A673 (cell line): ENCODE measurements at regions of chr21 and their contacts with region 1.

Region 1: DNA sequence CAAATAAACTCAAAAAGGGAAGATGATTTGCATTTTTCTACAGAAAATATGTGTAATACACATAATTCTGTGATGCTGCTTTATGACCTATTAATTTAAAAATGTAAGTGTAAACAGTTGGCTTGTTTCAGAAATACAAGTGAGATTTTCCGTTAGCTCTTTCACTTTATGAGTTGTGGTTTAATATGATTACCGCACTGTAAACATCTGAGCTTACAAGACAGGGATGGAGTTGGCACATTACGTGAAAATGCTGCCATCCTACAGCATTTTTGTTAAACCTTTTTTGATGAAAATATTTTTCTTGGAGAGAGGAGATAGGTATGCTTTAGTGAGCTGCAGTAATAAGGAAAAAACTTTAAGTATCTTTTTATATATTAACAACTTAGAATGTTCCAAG is 426.8 kb upstream of the ADAMTS5 start:
- DNase-seq: no peak
- H3K4me3 ChIP-seq: no peak overlapping the region
- H3K27ac ChIP-seq: no peak overlapping the region
- H3K4me1 ChIP-seq: no peaks in the 10 kb centered on the region
- H3K27me3 ChIP-seq: no peaks in the 10 kb centered on the region
- CTCF ChIP-seq: no peak

Region 2: GRCh38 chr21:25688275-25689155 is 1705.2 kb before region 1 on chr21:
- CTCF ChIA-PET with region 1: no interaction called
- POLR2A ChIA-PET with region 1: interaction called, 24 read pairs
- intact Hi-C with region 1: no loop called
- DNase-seq: no peak
- H3K4me3 ChIP-seq: no peak overlapping the region
- H3K27ac ChIP-seq: no peak overlapping the region
- H3K4me1 ChIP-seq: no peaks in the 10 kb centered on the region
- H3K27me3 ChIP-seq: no peaks in the 10 kb centered on the region
- CTCF ChIP-seq: no peak

Region 3: GRCh38 chr21:27423038-27423437 is 29.3 kb after region 1 on chr21:
- CTCF ChIA-PET with region 1: no interaction called
- POLR2A ChIA-PET with region 1: no interaction called
- intact Hi-C with region 1: no loop called
- DNase-seq: no peak
- H3K4me3 ChIP-seq: no peak overlapping the region
- H3K27ac ChIP-seq: no peak overlapping the region
- H3K4me1 ChIP-seq: no peaks in the 10 kb centered on the region
- H3K27me3 ChIP-seq: no peaks in the 10 kb centered on the region
- CTCF ChIP-seq: no peak